Breast epithelium (tissue), 4 donors: ENCODE measurements at regions of chr9 and their contacts with region 1.

Region 1: DNA sequence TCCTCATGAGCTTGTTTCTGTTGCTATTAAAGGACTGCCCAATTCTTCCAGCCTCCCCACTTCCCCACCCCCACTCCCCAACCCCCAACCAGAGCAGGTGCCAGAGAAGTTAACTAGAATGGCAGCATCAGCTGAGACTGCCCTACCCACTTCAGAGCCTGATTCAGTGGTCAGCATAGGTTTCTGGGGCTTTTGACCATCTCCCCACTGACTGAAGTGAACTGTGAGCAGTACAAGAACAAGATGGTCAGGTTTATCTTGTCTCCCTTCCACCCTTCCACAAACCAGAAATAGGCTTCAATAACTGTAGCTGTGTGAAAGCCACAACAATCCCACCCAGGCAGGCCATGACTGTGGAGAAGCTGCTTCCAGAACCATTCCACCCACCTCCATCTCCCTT is 289.4 kb upstream of the SLC24A2 start:
- DNase-seq: no peak
- H3K4me3 ChIP-seq: no peak overlapping the region
- H3K27ac ChIP-seq: no peak overlapping the region
- H3K4me1 ChIP-seq: no peaks in the 10 kb centered on the region
- H3K27me3 ChIP-seq: no peaks in the 10 kb centered on the region
- CTCF ChIP-seq: no peak
- POLR2A ChIP-seq: no peak

Region 2: DNA sequence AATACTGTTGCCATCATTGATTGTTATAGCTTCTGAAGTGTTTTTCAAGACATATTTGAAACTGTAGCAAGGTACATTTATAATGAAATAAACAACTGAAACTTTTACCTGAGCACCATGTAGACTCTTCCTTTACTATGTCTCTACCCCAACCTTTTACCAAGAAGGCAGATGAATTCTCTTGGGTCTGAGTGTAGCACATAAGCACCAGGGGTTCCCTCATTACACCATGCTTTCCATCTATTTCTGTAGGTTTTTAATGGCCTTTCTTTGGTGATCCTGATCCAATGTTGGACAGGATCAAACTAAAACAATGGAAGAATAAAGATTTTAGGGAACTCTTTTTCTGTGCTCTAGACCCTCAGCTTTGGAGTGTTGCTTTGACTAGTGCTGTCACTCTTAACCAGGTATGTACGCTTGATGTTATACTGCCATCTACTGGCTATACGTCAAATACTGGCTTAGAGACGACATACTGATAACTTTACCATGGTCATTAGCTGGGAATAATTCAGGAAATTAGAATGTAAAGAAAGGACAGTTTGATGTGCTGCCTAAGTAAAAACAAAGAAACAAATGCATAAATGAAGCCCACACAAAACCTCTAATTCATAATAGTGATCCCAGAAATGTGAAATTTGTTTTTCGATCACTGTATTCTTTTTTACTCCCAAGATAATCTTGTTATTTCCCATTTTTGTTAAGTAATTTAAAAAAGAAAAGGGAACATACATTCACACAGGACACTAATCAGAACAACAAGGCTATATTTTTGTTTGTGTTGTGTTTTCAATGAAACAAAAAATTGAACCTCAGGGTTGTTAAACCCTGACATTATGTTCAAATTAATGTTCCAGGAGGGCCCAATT is 1032.7 kb after region 1 on chr9:
- intact Hi-C with region 1: loop called (anchors 5 kb)
- DNase-seq: no peak
- H3K4me3 ChIP-seq: no peak overlapping the region
- H3K27ac ChIP-seq: no peak overlapping the region
- H3K4me1 ChIP-seq: no peaks in the 10 kb centered on the region
- H3K27me3 ChIP-seq: no peaks in the 10 kb centered on the region
- CTCF ChIP-seq: peak in 2 of 3 donors; percentile 67 to 68
- POLR2A ChIP-seq: no peak